ENCODE measurements at regions of chr16 and their contacts with region 1.

Region 1: GRCh38 chr16:56041686-56042085 is 149.6 kb upstream of the GNAO1 start:
- DNase-seq: peak; percentile 31 to 67
- H3K4me3 ChIP-seq: no peak overlapping the region
- H3K27ac ChIP-seq: no peak overlapping the region
- H3K4me1 ChIP-seq: no peaks in the 10 kb centered on the region
- H3K27me3 ChIP-seq: no peaks in the 10 kb centered on the region; a peak in 2 of 7 replicates
- CTCF ChIP-seq: peak; percentile 89 to 95 (median 90)
- EP300 ChIP-seq: no peak
- POLR2A ChIP-seq: no peak
- RAD21 ChIP-seq: peak; percentile 95

Region 2: GRCh38 chr16:56203052-56203451 is 161.4 kb after region 1 on chr16:
- CTCF ChIA-PET with region 1: interaction called, 14 read pairs
- POLR2A ChIA-PET with region 1: no interaction called
- DNase-seq: peak in 1 of 2 experiments; percentile 53
- H3K4me3 ChIP-seq: no peak overlapping the region
- H3K27ac ChIP-seq: no peak overlapping the region
- H3K4me1 ChIP-seq: peaks cover 0 to 4% (median 3%) of the 10 kb centered on the region in 4 experiments; a peak in 4 of 7 replicates
- H3K27me3 ChIP-seq: no peaks in the 10 kb centered on the region
- CTCF ChIP-seq: peak; percentile 44 to 49 (median 48)
- EP300 ChIP-seq: no peak
- POLR2A ChIP-seq: no peak
- RAD21 ChIP-seq: peak; percentile 49 to 64; a peak in 3 of 4 replicates